Activated CD4-positive, alpha-beta T cell treated with anti-CD3 and anti-CD28 coated beads for 36 hours (primary cell): ENCODE measurements at regions of chr15 and their contacts with region 1.

Region 1: DNA sequence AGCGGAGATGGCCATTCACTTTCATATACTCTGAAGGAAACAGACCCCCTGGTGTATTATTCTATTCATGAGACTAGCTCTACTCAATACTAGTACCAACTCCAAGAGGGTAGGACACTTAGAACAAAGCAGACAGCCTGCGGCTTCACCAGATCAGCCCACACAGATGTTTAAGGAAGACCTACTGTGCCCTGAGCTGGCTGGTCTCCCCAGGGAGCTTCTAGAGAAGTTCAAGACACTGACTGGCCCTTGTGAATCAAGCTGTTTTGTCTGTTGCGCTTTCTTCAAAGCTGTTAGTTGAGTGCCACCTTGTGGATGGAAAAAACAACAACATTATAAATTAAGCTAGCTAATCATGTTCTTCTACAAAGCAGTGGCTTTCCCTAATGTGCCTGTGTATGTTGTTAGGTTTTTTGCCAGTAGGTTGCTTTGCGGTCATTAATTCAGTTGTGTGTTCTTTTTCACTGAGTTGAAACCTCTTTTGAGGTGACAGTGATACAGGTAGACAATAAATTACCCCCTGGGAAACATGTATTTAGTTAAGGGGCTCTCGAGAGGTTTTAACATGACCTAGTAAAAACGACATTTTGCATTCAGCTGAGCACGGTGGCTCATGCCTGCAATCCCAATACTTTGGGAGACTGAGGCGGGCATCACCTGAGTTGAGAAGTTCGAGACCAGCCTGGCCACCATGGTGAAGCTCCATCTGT is 64.2 kb upstream of the MYZAP start:
- DNase-seq: peak; percentile 20
- ATAC-seq: peak; percentile 51
- H3K4me3 Mint-ChIP-seq: no peak overlapping the region
- H3K27ac Mint-ChIP-seq: no peak overlapping the region
- H3K4me1 Mint-ChIP-seq: no peaks in the 10 kb centered on the region
- H3K27me3 Mint-ChIP-seq: peaks cover 5% of the 10 kb centered on the region

Region 2: DNA sequence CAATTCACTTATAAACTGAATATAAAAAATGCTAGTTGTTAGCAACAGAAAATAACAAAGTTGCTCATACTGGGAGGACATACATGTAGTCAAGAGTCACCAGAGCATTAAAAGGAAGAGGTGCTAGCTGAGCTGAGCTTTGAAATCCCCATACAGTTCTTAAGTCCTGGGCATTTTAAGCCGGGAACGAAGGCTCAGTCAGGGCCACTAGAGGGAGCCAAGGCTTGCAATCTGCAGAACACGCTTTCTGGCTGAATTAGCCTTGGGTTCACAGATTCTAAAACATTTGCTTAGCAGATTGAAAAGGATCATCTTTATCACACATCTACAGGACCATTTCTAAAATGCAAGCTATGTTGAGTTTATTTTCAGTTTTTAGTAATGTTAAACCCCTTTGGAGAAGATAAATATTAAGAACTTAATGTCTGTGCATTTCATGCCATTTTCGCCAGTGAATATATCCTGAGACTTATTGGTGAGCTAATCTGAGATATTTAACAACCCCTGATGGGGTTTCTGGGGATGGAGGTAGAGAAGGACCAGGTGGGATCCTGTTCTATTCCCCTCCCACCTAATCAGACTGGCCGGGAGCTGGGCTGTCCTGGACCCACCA is 1036.3 kb before region 1 on chr15:
- CTCF ChIA-PET with region 1: interaction called, 7 read pairs
- POLR2A ChIA-PET with region 1: no interaction called
- intact Hi-C with region 1: loop called in 1 of 2 experiments (anchors 2 kb)
- DNase-seq: peak; percentile 78
- ATAC-seq: peak; percentile 49
- H3K4me3 Mint-ChIP-seq: no peak overlapping the region
- H3K27ac Mint-ChIP-seq: no peak overlapping the region
- H3K4me1 Mint-ChIP-seq: no peaks in the 10 kb centered on the region
- H3K27me3 Mint-ChIP-seq: no peaks in the 10 kb centered on the region

Region 3: GRCh38 chr15:56821721-56822425 is 705.7 kb before region 1 on chr15:
- CTCF ChIA-PET with region 1: no interaction called
- POLR2A ChIA-PET with region 1: no interaction called
- intact Hi-C with region 1: loop called in 1 of 2 experiments (anchors 5 kb)
- DNase-seq: peak; percentile 61
- ATAC-seq: peak; percentile 58
- H3K4me3 Mint-ChIP-seq: no peak overlapping the region
- H3K27ac Mint-ChIP-seq: no peak overlapping the region
- H3K4me1 Mint-ChIP-seq: no peaks in the 10 kb centered on the region
- H3K27me3 Mint-ChIP-seq: no peaks in the 10 kb centered on the region

Region 4: GRCh38 chr15:56886932-56887781 is 640.4 kb before region 1 on chr15:
- CTCF ChIA-PET with region 1: no interaction called
- POLR2A ChIA-PET with region 1: no interaction called
- intact Hi-C with region 1: no loop called
- DNase-seq: peak; percentile 89
- ATAC-seq: peak; percentile 96
- H3K4me3 Mint-ChIP-seq: peak overlapping the region; percentile 71
- H3K27ac Mint-ChIP-seq: peak overlapping the region; percentile 86
- H3K4me1 Mint-ChIP-seq: peaks cover 20% of the 10 kb centered on the region
- H3K27me3 Mint-ChIP-seq: no peaks in the 10 kb centered on the region

Region 5: DNA sequence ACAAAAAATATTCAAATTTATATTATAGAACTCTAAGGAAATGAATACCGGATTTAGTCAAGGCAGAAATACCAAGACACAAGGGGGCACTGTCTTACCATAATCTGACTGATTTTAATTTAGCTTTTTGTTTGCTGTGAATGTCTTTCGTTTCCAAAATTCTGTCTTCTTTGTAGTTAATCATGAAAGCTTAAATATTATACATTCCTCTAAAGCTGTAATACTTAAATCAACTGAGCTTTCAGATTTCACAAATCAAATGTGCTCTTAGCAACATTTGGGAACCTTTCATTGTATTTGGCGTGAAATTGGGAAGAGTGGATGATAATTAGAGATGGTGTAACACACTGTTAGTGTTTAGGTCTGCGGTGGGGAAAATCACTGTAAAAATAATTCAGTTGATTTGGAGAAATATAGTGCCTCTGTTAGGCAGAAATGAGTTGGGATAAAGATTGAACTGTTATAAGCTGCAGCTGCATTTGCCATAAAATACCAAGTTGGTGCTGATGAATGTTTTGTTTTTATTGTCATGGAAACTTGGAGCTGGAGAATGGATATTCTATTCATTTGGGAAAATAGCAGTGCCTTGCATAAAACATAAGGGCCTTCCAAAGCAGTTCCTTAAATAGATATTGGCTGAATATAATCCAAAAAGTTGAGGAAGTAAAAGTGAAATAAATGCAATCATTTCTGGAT is 380.9 kb before region 1 on chr15:
- CTCF ChIA-PET with region 1: interaction called, 21 read pairs
- POLR2A ChIA-PET with region 1: no interaction called
- intact Hi-C with region 1: loop called (anchors 1 to 5 kb)
- DNase-seq: peak; percentile 9
- ATAC-seq: no peak
- H3K4me3 Mint-ChIP-seq: no peak overlapping the region
- H3K27ac Mint-ChIP-seq: no peak overlapping the region
- H3K4me1 Mint-ChIP-seq: peaks cover 6% of the 10 kb centered on the region
- H3K27me3 Mint-ChIP-seq: no peaks in the 10 kb centered on the region

Region 6: GRCh38 chr15:57340682-57341259 is 186.8 kb before region 1 on chr15:
- CTCF ChIA-PET with region 1: interaction called, 179 read pairs
- POLR2A ChIA-PET with region 1: interaction called, 5 read pairs
- intact Hi-C with region 1: loop called (anchors 1 kb)
- DNase-seq: peak; percentile 64
- ATAC-seq: peak; percentile 55
- H3K4me3 Mint-ChIP-seq: no peak overlapping the region
- H3K27ac Mint-ChIP-seq: no peak overlapping the region
- H3K4me1 Mint-ChIP-seq: no peaks in the 10 kb centered on the region
- H3K27me3 Mint-ChIP-seq: no peaks in the 10 kb centered on the region

Region 7: DNA sequence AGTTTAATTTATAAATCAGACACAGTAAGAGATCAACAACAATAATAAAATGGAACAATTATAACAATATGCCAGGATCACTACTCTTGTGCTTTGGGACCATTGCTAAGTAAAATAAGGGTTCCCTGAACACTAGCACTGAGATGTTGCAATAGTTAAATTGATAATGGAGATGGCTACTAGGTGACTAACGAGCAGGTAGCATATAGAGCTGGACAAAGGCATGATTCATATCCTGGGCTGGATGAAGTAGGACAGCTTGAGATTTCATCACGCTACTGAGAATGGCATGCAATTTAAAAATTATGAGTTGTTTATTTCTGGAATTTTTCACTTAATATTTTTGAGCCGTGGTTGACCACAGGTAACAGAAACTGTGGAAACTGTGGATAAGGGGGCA is 43.5 kb after region 1 on chr15:
- CTCF ChIA-PET with region 1: no interaction called
- POLR2A ChIA-PET with region 1: no interaction called
- intact Hi-C with region 1: no loop called
- DNase-seq: no peak
- ATAC-seq: no peak
- H3K4me3 Mint-ChIP-seq: no peak overlapping the region
- H3K27ac Mint-ChIP-seq: no peak overlapping the region
- H3K4me1 Mint-ChIP-seq: no peaks in the 10 kb centered on the region
- H3K27me3 Mint-ChIP-seq: peaks cover 6% of the 10 kb centered on the region

Region 8: GRCh38 chr15:57806003-57806402 is 278.5 kb after region 1 on chr15:
- CTCF ChIA-PET with region 1: no interaction called
- POLR2A ChIA-PET with region 1: no interaction called
- intact Hi-C with region 1: no loop called
- DNase-seq: no peak
- ATAC-seq: no peak
- H3K4me3 Mint-ChIP-seq: no peak overlapping the region
- H3K27ac Mint-ChIP-seq: no peak overlapping the region
- H3K4me1 Mint-ChIP-seq: no peaks in the 10 kb centered on the region
- H3K27me3 Mint-ChIP-seq: no peaks in the 10 kb centered on the region